ENCODE measurements at regions of chr3 and their contacts with region 1.

Region 1: GRCh38 chr3:148991194-148992026 is at the start of gene GYG1:
- DNase-seq: peak; percentile 85
- H3K4me3 ChIP-seq: peak within 1 kb of the TSS; percentile 61 to 88 (median 66)
- H3K27ac ChIP-seq: peak within 1 kb of the TSS; percentile 30
- H3K4me1 ChIP-seq: peaks cover 9% of the 10 kb centered on the region
- H3K27me3 ChIP-seq: no peaks in the 10 kb centered on the region
- CTCF ChIP-seq: peak; percentile 8 to 10
- POLR2A ChIP-seq: peak; percentile 95
- total RNA-seq, gene GYG1: 46.8 and 58.5 TPM in 2 replicates

Region 2: GRCh38 chr3:148962513-148962912 is 28.9 kb before region 1 on chr3:
- CTCF ChIA-PET with region 1: interaction called, 6 read pairs
- POLR2A ChIA-PET with region 1: no interaction called
- dilution Hi-C with region 1: no loop called
- intact Hi-C with region 1: loop called (anchors 2 kb)
- DNase-seq: peak; percentile 86
- H3K4me3 ChIP-seq: no peak overlapping the region
- H3K27ac ChIP-seq: no peak overlapping the region
- H3K4me1 ChIP-seq: peaks cover 2% of the 10 kb centered on the region
- H3K27me3 ChIP-seq: no peaks in the 10 kb centered on the region
- CTCF ChIP-seq: peak; percentile 8 to 29
- POLR2A ChIP-seq: no peak

Region 3: DNA sequence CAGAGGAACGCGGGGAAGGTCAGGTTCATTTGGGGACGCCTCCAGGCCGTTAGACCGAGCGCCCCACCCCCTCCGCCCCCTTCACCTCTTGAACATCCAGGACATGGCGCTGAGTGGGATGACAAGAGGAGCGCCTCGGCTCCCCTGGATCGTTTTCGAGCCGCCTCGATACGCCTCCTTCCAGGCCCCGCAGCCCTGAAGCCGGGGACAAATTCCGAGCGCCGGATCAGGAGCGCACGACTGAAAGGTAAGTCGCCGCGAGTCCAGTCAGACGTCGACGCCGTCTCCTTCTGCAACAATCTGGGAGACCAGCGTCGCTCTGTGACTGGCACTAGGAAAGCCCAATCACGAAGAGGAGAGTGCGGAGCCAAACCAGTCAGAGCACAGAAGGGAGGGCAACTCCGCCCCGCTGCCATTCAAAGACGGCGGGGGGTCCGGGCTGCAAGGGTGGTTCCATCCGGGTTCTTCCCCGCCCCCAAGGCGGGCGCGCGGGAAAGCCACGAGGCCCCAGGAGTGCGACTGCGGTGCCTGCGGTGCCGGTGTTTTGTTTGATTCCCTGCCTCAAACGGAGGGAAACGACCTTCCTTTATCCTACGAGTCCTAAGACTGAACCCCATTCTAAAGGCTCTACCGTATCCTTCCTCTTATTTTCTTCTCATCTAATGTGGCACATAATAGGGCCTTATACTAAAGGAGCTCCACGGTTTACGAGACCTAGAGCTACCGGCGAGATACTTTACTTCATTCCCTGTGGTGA is 95.0 kb after region 1 on chr3 and contains the start of gene HLTF:
- CTCF ChIA-PET with region 1: no interaction called
- POLR2A ChIA-PET with region 1: no interaction called
- dilution Hi-C with region 1: no loop called
- intact Hi-C with region 1: loop called (anchors 2 kb)
- DNase-seq: peak; percentile 98
- H3K4me3 ChIP-seq: peak within 1 kb of the TSS; percentile 68 to 81 (median 73)
- H3K27ac ChIP-seq: peak within 1 kb of the TSS; percentile 47
- H3K4me1 ChIP-seq: peaks cover 4% of the 10 kb centered on the region
- H3K27me3 ChIP-seq: no peaks in the 10 kb centered on the region
- CTCF ChIP-seq: no peak
- POLR2A ChIP-seq: peak; percentile 64
- total RNA-seq, gene HLTF: 23.2 and 24.6 TPM in 2 replicates

Region 4: DNA sequence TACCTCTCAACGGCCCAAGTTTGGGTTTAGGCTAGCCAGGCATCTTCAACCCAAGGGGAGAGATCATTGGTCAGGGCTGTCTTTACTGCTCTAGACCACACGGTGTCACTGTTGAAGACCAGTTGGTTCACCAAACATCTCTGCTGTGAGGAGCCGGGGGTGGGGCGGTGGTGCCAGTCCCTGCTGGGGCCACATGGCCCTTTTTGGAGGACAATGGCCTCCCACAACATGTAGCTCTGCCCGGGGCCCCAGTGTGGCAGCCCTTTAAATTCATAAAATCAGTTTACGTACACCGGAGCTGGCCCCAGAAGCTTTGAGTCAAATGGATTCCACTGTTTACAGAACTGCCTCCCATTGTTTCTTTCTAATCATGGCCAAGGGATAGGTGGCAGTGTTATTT is 361.1 kb after region 1 on chr3:
- CTCF ChIA-PET with region 1: no interaction called
- POLR2A ChIA-PET with region 1: no interaction called
- dilution Hi-C with region 1: no loop called
- intact Hi-C with region 1: no loop called
- DNase-seq: peak; percentile 70
- H3K4me3 ChIP-seq: no peak overlapping the region
- H3K27ac ChIP-seq: no peak overlapping the region
- H3K4me1 ChIP-seq: peaks cover 12% of the 10 kb centered on the region
- H3K27me3 ChIP-seq: no peaks in the 10 kb centered on the region
- CTCF ChIP-seq: peak; percentile 74
- POLR2A ChIP-seq: no peak

Region 5: GRCh38 chr3:149812606-149813366 is 821.4 kb after region 1 on chr3 and contains the start of gene RNF13:
- CTCF ChIA-PET with region 1: no interaction called
- POLR2A ChIA-PET with region 1: no interaction called
- dilution Hi-C with region 1: no loop called
- intact Hi-C with region 1: no loop called
- DNase-seq: peak; percentile 97
- H3K4me3 ChIP-seq: peak within 1 kb of the TSS; percentile 59 to 84 (median 83)
- H3K27ac ChIP-seq: peak within 1 kb of the TSS; percentile 65
- H3K4me1 ChIP-seq: peaks cover 24% of the 10 kb centered on the region
- H3K27me3 ChIP-seq: no peaks in the 10 kb centered on the region
- CTCF ChIP-seq: no peak
- POLR2A ChIP-seq: peak; percentile 78
- total RNA-seq, gene RNF13: 27.1 and 29.5 TPM in 2 replicates